Ascending aorta (tissue), 2 donors: ENCODE measurements at regions of chr9 and their contacts with region 1.

Region 1: GRCh38 chr9:120477521-120478001 is 102.4 kb downstream of the CDK5RAP2 start:
- DNase-seq: peak in 1 of 2 donors; percentile 72
- H3K4me3 ChIP-seq: no peak overlapping the region
- H3K27ac ChIP-seq: no peak overlapping the region
- H3K4me1 ChIP-seq: peaks cover 0 to 4% of the 10 kb centered on the region in 2 donors
- H3K27me3 ChIP-seq: no peaks in the 10 kb centered on the region
- CTCF ChIP-seq: peak; percentile 79 to 98 (median 85)

Region 2: DNA sequence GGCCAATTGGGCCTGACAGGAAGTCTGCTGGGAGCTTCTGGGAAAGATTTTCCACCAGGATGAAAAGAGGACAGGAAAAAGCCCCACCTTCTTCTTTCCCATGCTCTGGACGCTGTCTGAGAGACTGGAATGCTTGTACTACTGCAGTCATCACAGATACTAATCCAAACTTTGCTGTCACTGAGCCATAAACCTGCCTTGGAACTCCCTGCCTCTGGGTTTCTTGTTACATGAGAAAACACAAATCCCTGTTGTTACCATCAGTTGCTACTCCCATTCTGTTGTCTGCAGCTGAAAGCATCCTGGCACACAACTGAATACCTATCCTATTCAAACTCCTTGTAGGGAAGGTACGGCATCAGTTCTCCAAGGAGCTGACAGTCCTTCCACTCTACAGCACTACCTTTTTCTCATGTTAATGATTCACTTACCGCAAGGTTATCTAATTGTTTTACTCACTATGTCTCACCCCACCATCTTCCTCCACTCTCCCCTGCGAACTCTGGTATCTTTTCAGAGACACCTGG is 65.1 kb before region 1 on chr9:
- intact Hi-C with region 1: loop called (anchors 5 kb)
- DNase-seq: no peak
- H3K4me3 ChIP-seq: no peak overlapping the region
- H3K27ac ChIP-seq: peak overlapping the region in 1 of 2 donors; percentile 51
- H3K4me1 ChIP-seq: no peaks in the 10 kb centered on the region
- H3K27me3 ChIP-seq: no peaks in the 10 kb centered on the region
- CTCF ChIP-seq: no peak